Posterior cingulate gyrus (tissue), 11 donors: ENCODE measurements at regions of chr12 and their contacts with region 1.

Region 1: GRCh38 chr12:107884769-107885694 is 110.5 kb downstream of the ASCL4 start:
- DNase-seq: peak in 8 of 10 donors; percentile 38 to 91 (median 52)

Region 2: GRCh38 chr12:107679336-107679735 is 205.7 kb before region 1 on chr12:
- intact Hi-C with region 1: loop called (anchors 5 kb)
- DNase-seq: no peak

Region 3: DNA sequence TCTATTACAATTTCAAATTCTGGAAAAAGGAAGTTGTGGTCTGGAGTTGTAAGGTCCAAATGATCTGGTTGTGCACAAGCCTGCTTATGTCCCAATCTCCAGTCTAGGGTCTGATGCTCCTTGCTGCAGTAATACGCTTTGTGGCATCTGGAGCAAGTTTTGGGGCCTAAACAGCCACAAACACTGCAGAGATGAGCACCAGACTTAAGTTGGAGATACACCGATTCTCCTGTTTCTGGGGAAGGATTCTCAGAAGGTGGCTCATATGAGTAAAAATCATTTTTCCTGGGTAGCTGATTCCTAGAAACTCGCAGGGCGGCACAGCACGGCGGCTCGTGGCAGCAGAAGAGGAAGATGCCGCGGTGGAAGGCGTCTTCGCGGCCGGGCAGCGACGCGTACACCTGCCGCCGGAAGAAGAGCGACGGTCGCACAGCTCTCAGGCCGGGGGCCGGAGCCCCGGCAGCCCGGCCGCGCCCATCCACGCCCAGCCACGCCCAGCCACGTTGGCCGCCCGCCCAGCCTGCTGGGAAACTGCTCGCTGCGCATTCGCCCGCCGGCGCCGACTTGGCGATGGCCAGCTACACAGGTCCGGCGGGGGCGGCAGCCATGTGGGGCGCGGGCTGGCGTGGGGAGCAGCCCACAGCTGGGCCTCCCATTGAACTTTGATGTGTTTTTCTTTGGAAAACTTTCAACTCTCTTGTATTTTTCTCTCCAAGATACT is 18.5 kb after region 1 on chr12:
- intact Hi-C with region 1: no loop called
- DNase-seq: peak in 9 of 10 donors; percentile 23 to 92 (median 43)